ENCODE measurements at regions of chr2 and their contacts with region 1.

Region 1: DNA sequence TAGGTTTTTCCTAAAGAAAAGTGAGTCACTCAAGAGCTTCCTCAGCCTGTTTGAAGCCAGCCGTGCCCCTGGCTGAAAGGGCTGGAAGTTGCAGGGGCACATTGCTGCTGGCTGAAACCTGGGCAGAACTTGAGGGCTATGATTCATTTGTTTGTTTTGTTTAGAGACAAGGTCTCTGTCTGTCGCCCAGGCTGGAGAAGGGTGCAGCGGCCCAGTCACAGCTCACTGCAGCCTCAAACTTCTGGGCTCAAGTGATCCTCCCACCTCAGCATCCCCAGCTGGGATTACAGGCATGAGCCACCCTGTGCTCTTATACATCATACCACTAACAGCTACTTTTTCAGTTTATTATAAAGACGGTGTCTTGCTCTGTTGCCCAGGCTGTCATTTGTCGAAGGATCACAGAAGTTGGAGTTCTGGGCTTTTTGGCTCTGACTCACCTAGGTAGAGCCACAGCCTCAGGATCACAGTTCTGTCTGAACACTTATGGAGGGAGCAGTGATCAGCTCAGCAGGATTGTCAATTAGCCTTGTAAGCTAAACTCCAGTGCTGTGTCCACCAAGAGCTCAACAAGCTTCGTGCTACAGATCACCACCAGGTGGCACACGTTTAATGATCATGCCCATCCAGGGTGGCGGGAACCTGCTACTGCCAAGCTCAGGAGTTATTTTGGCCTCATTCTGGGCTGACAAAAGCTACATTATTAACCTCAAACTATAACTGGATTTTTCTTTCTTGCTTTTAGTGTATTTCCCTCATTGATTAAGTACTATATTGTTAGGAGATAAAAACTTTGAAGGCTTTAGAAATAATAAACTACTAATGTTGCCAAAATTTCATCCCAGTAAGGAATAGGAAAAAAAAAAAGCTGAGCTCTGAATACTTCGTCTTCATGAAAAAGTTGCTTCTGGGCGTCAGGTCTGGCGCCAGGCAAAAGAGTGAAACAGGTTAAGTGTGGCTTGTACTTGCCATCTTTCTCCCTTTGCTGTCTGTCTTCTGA is 57.9 kb downstream of the ARHGEF33 start:
- DNase-seq: peak; percentile 89
- ATAC-seq: peak; percentile 94
- H3K4me3 ChIP-seq: peak overlapping the region in 1 of 3 experiments; percentile 32; a peak in 2 of 6 replicates
- H3K27ac ChIP-seq: peak overlapping the region; percentile 39
- H3K4me1 ChIP-seq: peaks cover 46% of the 10 kb centered on the region
- H3K27me3 ChIP-seq: no peaks in the 10 kb centered on the region
- CTCF ChIP-seq: peak; percentile 97
- EP300 ChIP-seq: peak in 1 of 2 experiments; percentile 24; a peak in 1 of 4 replicates
- POLR2A ChIP-seq: no peak
- RAD21 ChIP-seq: peak; percentile 86

Region 2: DNA sequence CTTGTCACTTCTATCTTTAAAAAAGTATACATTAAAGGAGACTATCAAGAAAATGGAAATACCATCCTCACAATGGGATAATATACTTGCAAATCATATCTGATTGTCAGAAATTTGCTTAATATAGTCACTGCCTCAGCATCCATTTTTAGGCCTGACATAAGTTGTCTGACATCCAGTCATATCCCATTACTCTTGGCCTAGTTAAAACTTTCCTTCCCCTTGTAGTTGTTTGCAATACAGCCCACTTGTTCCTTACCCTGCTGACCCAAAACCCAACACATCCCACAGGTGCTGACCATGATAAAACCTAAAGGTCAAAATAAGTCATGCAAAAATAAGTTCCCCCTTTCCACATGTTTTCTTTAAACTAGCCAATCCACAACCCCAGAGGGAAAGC is 61.5 kb before region 1 on chr2:
- CTCF ChIA-PET with region 1: no interaction called
- POLR2A ChIA-PET with region 1: no interaction called
- in situ Hi-C with region 1: no loop called
- intact Hi-C with region 1: no loop called
- DNase-seq: no peak
- ATAC-seq: no peak
- H3K4me3 ChIP-seq: no peak overlapping the region
- H3K27ac ChIP-seq: no peak overlapping the region
- H3K4me1 ChIP-seq: no peaks in the 10 kb centered on the region
- H3K27me3 ChIP-seq: no peaks in the 10 kb centered on the region
- CTCF ChIP-seq: no peak
- EP300 ChIP-seq: no peak
- POLR2A ChIP-seq: no peak
- RAD21 ChIP-seq: no peak

Region 3: GRCh38 chr2:38925982-38926381 is 21.6 kb before region 1 on chr2:
- CTCF ChIA-PET with region 1: no interaction called
- POLR2A ChIA-PET with region 1: interaction called, 5 read pairs
- in situ Hi-C with region 1: no loop called
- intact Hi-C with region 1: loop called (anchors 2 kb)
- DNase-seq: peak; percentile 62
- ATAC-seq: peak; percentile 99
- H3K4me3 ChIP-seq: peak overlapping the region in 2 of 3 experiments; percentile 35 to 37; a peak in 5 of 6 replicates
- H3K27ac ChIP-seq: no peak overlapping the region
- H3K4me1 ChIP-seq: peaks cover 34% of the 10 kb centered on the region
- H3K27me3 ChIP-seq: no peaks in the 10 kb centered on the region
- CTCF ChIP-seq: peak; percentile 80
- EP300 ChIP-seq: no peak
- POLR2A ChIP-seq: no peak
- RAD21 ChIP-seq: peak; percentile 75

Region 4: GRCh38 chr2:39000552-39000951 is 53.0 kb after region 1 on chr2:
- CTCF ChIA-PET with region 1: no interaction called
- POLR2A ChIA-PET with region 1: no interaction called
- in situ Hi-C with region 1: no loop called
- intact Hi-C with region 1: loop called (anchors 5 kb)
- DNase-seq: no peak
- ATAC-seq: no peak
- H3K4me3 ChIP-seq: no peak overlapping the region
- H3K27ac ChIP-seq: no peak overlapping the region
- H3K4me1 ChIP-seq: peaks cover 20% of the 10 kb centered on the region
- H3K27me3 ChIP-seq: no peaks in the 10 kb centered on the region
- CTCF ChIP-seq: no peak
- EP300 ChIP-seq: no peak
- POLR2A ChIP-seq: no peak
- RAD21 ChIP-seq: no peak

Region 5: DNA sequence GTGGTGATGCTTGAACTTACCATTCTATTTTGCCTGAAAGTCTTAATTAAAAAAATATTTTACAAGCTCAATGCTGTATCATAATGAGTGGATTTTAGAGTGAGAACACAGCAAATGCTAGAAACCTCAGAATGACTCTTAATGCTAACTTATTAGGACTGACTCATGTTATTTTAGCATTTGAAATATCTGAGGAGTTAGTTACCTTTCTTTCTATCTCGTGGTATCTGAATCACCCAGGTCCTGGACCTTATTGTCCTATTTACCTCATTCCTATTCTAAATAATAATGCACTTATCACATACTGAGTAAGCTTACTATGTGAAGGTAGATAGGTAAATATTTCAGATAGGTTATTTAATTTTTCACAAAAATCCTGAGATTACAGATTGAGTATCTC is 102.6 kb after region 1 on chr2:
- CTCF ChIA-PET with region 1: no interaction called
- POLR2A ChIA-PET with region 1: no interaction called
- in situ Hi-C with region 1: loop called (anchors 10 kb)
- intact Hi-C with region 1: loop called (anchors 5 kb)
- DNase-seq: no peak
- ATAC-seq: no peak
- H3K4me3 ChIP-seq: no peak overlapping the region
- H3K27ac ChIP-seq: no peak overlapping the region
- H3K4me1 ChIP-seq: no peaks in the 10 kb centered on the region
- H3K27me3 ChIP-seq: no peaks in the 10 kb centered on the region
- CTCF ChIP-seq: no peak
- EP300 ChIP-seq: no peak
- POLR2A ChIP-seq: no peak
- RAD21 ChIP-seq: no peak

Region 6: GRCh38 chr2:39124000-39124745 is 176.6 kb after region 1 on chr2:
- CTCF ChIA-PET with region 1: no interaction called
- POLR2A ChIA-PET with region 1: interaction called, 10 read pairs
- in situ Hi-C with region 1: no loop called
- intact Hi-C with region 1: loop called (anchors 2 kb)
- DNase-seq: peak; percentile 97
- ATAC-seq: peak; percentile 79
- H3K4me3 ChIP-seq: peak overlapping the region; percentile 81 to 82 (median 81)
- H3K27ac ChIP-seq: peak overlapping the region; percentile 93
- H3K4me1 ChIP-seq: peaks cover 47% of the 10 kb centered on the region
- H3K27me3 ChIP-seq: no peaks in the 10 kb centered on the region; a peak in 1 of 5 replicates
- CTCF ChIP-seq: peak; percentile 93
- EP300 ChIP-seq: peak; percentile 43 to 78; a peak in 2 of 4 replicates
- POLR2A ChIP-seq: peak; percentile 85 to 90
- RAD21 ChIP-seq: peak; percentile 72